ENCODE measurements at regions of chr20 and their contacts with region 1.

Region 1: GRCh38 chr20:3204124-3204822 is at the start of gene DDRGK1:
- DNase-seq: peak; percentile 78 to 83 (median 80)
- H3K4me3 ChIP-seq: peak within 1 kb of the TSS; percentile 78 to 98 (median 79)
- H3K4me3 Mint-ChIP-seq: peak within 1 kb of the TSS; percentile 96 to 97
- H3K27ac ChIP-seq: peak within 1 kb of the TSS; percentile 14 to 79
- H3K27ac Mint-ChIP-seq: peak within 1 kb of the TSS; percentile 55 to 94 (median 89)
- H3K4me1 ChIP-seq: peaks cover 19 to 23% of the 10 kb centered on the region in 2 donors
- H3K4me1 Mint-ChIP-seq: peaks cover 20% of the 10 kb centered on the region
- H3K27me3 ChIP-seq: no peaks in the 10 kb centered on the region
- H3K27me3 Mint-ChIP-seq: peaks cover 0 to 2% (median 0%) of the 10 kb centered on the region in 3 donors
- CTCF ChIP-seq: no peak
- polyA plus RNA-seq, gene DDRGK1: 39.9 to 42.7 (median 42.6) TPM

Region 2: DNA sequence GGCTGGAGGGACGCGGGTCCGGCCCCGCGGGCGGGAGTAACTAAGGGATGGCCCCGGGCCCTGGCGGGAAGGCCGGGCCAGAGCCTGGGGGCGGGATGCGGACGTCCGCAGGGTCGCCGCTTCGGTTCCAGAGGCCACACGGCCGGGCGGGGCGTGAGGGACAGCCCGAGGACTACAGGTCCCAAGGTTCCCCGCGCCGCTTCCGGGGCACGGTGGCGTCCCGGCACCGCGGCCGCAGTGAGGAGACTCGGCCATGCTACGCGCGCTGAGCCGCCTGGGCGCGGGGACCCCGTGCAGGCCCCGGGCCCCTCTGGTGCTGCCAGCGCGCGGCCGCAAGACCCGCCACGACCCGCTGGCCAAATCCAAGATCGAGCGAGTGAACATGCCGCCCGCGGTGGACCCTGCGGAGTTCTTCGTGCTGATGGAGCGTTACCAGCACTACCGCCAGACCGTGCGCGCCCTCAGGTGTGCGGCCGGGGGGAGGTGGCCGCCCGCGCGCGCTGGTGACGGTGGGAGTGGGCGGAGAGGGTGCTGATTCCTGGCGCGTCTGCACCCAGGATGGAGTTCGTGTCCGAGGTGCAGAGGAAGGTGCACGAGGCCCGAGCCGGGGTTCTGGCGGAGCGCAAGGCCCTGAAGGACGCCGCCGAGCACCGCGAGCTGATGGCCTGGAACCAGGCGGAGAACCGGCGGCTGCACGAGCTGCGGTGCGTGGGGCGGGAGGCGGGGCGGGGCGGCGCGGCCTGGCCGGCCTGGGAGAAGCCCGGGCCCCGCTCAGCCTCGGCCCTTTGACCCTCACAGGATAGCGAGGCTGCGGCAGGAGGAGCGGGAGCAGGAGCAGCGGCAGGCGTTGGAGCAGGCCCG is 158.2 kb before region 1 on chr20 and contains the start of gene MRPS26:
- intact Hi-C with region 1: loop called in 1 of 2 experiments (anchors 5 kb)
- DNase-seq: peak; percentile 71 to 78 (median 75)
- H3K4me3 ChIP-seq: peak within 1 kb of the TSS; percentile 65 to 97 (median 88)
- H3K4me3 Mint-ChIP-seq: peak within 1 kb of the TSS; percentile 82 to 87
- H3K27ac ChIP-seq: peak within 1 kb of the TSS; percentile 65 to 87
- H3K27ac Mint-ChIP-seq: peak within 1 kb of the TSS; percentile 85 to 96 (median 92)
- H3K4me1 ChIP-seq: peaks cover 16 to 26% of the 10 kb centered on the region in 2 donors
- H3K4me1 Mint-ChIP-seq: peaks cover 19% of the 10 kb centered on the region
- H3K27me3 ChIP-seq: no peaks in the 10 kb centered on the region
- H3K27me3 Mint-ChIP-seq: peaks cover 1 to 3% (median 2%) of the 10 kb centered on the region in 3 donors
- CTCF ChIP-seq: no peak
- polyA plus RNA-seq, gene MRPS26: 19.4 to 36.6 (median 29.8) TPM

Region 3: DNA sequence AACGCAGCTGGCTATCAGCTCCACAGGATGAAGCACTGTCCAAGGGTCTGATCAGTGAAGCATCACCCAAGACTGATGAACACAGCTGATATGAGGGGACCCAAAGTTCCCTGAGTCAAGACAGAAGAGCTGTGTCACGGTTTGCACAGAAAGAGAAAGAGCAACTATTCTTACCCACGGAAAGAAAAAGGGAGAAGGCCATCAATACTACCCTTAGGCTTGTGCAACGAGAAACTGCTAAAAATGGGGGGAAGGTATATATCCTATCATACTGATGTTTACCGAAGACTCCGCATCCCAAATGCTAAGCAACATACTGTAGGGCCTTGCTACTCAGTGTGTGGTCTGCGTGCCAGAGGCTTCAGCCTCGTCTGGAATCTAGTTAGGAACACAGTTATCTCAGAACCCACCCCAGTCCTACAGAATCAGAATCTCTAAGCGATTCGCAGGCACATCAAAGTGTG is 45.3 kb before region 1 on chr20:
- intact Hi-C with region 1: loop called in 1 of 2 experiments (anchors 2 kb)
- DNase-seq: peak in 1 of 3 donors; percentile 6
- H3K4me3 ChIP-seq: peak overlapping the region; percentile 93 to 96 (median 94)
- H3K4me3 Mint-ChIP-seq: peak overlapping the region; percentile 97 to 98
- H3K27ac ChIP-seq: peak overlapping the region; percentile 65 to 91
- H3K27ac Mint-ChIP-seq: peak overlapping the region; percentile 92 to 97 (median 94)
- H3K4me1 ChIP-seq: peaks cover 33 to 37% of the 10 kb centered on the region in 2 donors
- H3K4me1 Mint-ChIP-seq: peaks cover 36% of the 10 kb centered on the region
- H3K27me3 ChIP-seq: no peaks in the 10 kb centered on the region
- H3K27me3 Mint-ChIP-seq: peaks cover 0 to 5% (median 1%) of the 10 kb centered on the region in 3 donors
- CTCF ChIP-seq: no peak

Region 4: DNA sequence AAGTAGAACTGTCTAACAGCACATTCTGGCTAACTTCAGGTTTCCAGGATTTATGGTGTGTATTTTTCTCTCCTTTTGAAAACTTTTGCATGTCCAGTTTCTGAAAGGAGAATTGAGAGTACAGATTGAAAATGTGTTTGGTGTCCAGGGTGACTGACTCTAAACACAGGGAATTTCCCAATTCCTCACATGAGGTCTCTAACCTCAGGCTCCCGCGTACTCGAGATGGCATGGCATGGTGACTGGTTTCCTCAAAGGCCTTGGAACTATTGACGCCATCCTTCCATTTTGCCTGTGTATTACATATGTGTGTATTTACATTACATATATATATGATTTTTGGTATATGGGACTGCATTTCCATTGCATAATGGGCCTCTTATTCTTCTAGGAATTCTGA is 1569.9 kb after region 1 on chr20:
- intact Hi-C with region 1: no loop called
- DNase-seq: peak; percentile 78 to 90 (median 83)
- H3K4me3 ChIP-seq: no peak overlapping the region
- H3K4me3 Mint-ChIP-seq: no peak overlapping the region
- H3K27ac ChIP-seq: peak overlapping the region; percentile 37 to 68
- H3K27ac Mint-ChIP-seq: peak overlapping the region; percentile 45 to 83 (median 67)
- H3K4me1 ChIP-seq: peaks cover 23 to 25% of the 10 kb centered on the region in 2 donors
- H3K4me1 Mint-ChIP-seq: peaks cover 31% of the 10 kb centered on the region
- H3K27me3 ChIP-seq: no peaks in the 10 kb centered on the region
- H3K27me3 Mint-ChIP-seq: no peaks in the 10 kb centered on the region
- CTCF ChIP-seq: no peak

Measured in CD14-positive monocyte (primary cell).